ENCODE measurements at regions of chr2 and their contacts with region 1.

Region 1: GRCh38 chr2:69565431-69565839 is 78.1 kb downstream of the AAK1 start:
- DNase-seq: peak; percentile 40
- ATAC-seq: peak; percentile 99
- H3K4me3 ChIP-seq: no peak overlapping the region
- H3K27ac ChIP-seq: no peak overlapping the region
- H3K4me1 ChIP-seq: 0 out of 2 replicates have a peak, but pooled peaks cover 2% of the 10 kb centered on the region
- H3K27me3 ChIP-seq: no peaks in the 10 kb centered on the region
- CTCF ChIP-seq: peak; percentile 83 to 97 (median 89)
- EP300 ChIP-seq: no peak
- POLR2A ChIP-seq: no peak
- RAD21 ChIP-seq: peak; percentile 71

Region 2: DNA sequence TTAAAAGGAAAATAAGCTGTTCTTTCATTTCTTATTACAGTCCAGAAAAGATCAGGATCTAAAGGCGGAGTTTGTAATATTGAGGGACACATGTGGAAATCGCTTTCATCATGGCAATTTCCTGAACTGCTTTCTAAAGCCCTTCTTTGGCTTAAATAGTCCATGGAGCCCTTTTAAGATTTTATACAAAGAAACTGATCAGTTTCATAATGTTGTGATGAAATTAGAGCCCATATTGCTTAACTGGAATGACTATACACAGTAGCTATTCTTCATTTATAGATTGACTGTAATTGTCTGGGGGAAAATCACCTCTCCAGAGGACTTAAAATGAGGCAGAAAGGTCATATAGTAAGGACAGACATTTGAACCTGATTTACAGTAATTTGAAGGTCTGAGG is 1846.1 kb before region 1 on chr2:
- CTCF ChIA-PET with region 1: no interaction called
- POLR2A ChIA-PET with region 1: no interaction called
- RAD21 ChIA-PET with region 1: no interaction called
- SMC1A ChIA-PET with region 1: no interaction called
- in situ Hi-C with region 1: no loop called
- intact Hi-C with region 1: no loop called
- DNase-seq: no peak
- ATAC-seq: no peak
- H3K4me3 ChIP-seq: no peak overlapping the region
- H3K27ac ChIP-seq: no peak overlapping the region
- H3K4me1 ChIP-seq: no peaks in the 10 kb centered on the region
- H3K27me3 ChIP-seq: no peaks in the 10 kb centered on the region
- CTCF ChIP-seq: no peak
- EP300 ChIP-seq: no peak
- POLR2A ChIP-seq: no peak
- RAD21 ChIP-seq: no peak

Region 3: DNA sequence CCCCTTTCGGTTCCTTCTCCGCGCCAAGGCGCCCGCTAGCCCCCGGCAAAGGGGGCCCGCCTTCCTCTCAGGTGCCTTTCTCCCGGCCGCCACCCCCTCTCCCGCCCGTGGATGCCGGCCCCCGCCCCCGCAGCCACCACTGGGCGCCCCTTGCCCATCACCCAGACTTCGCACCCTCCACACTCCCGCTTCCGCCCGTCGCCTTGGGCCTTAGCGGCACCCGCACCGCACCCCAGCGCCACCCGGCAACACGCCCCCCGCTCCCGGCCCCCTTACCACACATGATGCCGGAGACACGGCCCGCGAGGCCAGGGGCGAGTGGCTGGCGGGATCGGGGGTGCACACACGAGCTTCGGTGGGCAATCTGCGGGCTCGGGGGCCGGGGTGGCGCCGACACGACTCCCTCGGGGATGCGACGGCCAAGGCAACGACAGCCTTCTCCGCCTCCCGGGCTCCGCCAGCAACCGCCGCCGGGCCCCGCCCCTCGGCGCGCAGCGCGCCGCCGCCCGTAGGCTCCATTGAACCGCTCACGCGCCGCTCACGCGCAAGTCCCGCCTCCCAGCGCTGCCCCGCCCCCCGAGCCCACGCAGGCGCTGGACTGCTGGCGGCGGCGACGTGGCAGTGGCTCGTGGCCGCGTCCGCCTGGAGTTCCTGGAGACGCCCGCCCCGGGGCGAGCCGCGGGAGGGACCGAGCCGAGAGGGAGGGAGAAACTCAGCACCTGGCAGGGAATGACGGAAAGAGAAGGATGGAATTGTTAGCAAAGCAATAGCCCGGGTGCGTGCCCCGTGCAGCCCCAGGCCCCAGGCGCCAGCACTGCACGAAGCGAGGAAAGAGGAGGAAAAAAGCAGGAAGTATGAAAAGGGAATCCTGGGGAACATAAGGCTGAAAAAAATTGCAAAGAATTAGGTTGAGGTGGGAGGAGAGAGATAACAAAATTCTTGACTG is 178.4 kb before region 1 on chr2 and contains the start of gene GFPT1:
- CTCF ChIA-PET with region 1: interaction called, 16 read pairs
- POLR2A ChIA-PET with region 1: interaction called, 5 read pairs
- RAD21 ChIA-PET with region 1: interaction called, 9 read pairs
- SMC1A ChIA-PET with region 1: interaction called, 9 read pairs
- in situ Hi-C with region 1: no loop called
- intact Hi-C with region 1: no loop called
- DNase-seq: peak; percentile 54
- ATAC-seq: peak; percentile 93
- H3K4me3 ChIP-seq: peak within 1 kb of the TSS; percentile 88
- H3K27ac ChIP-seq: peak within 1 kb of the TSS; percentile 82
- H3K4me1 ChIP-seq: peaks cover 12% of the 10 kb centered on the region; the same call in 1 of the 2 replicates
- H3K27me3 ChIP-seq: no peaks in the 10 kb centered on the region
- CTCF ChIP-seq: no peak
- EP300 ChIP-seq: no peak
- POLR2A ChIP-seq: peak; percentile 95
- RAD21 ChIP-seq: no peak
- polyA plus RNA-seq, gene GFPT1: 10.1 to 13.0 TPM

Region 4: DNA sequence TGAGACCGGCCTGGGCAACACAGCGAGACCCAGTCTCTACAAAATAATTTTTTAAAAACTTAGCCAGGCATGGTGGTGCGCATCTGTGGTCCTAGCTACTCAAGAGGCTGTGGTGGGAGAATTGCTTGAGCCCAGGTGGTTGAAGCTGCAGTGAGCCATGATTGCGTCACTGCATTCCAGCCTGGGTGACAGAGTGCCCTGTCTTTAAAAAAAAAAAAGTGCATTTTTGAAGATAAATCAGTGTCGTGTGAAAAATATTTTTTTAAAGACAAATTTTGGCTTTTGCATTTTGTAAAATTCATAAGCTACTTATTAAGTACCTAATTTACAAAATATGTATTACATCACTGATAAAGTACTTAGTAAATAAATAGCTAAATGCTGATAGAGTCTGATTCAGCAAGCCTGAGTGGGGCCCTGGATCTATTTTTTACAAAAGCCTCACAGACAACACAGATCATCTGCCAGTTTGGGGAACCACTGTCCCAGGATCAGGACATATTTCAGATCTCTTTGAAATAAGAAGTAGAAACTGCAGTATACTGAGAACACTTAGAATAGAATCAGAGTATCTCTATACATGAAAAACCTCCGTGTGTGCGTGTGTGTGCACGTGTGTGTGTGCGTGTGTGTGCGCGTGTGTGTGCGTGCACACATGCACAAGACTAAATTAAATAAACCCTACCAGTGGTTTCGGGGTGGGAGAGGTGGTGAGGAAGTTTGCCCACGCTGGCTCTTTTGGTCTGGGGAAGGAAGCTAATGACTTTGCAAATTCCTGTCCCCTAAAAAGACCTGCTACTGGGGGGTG is 16.5 kb after region 1 on chr2:
- CTCF ChIA-PET with region 1: interaction called, 144 read pairs
- POLR2A ChIA-PET with region 1: interaction called, 7 read pairs
- RAD21 ChIA-PET with region 1: interaction called, 7 read pairs
- SMC1A ChIA-PET with region 1: interaction called, 30 read pairs
- in situ Hi-C with region 1: no loop called
- intact Hi-C with region 1: no loop called
- DNase-seq: peak; percentile 40
- ATAC-seq: peak; percentile 64
- H3K4me3 ChIP-seq: peak overlapping the region; percentile 44; the same call in 1 of the 2 replicates
- H3K27ac ChIP-seq: peak overlapping the region; percentile 28
- H3K4me1 ChIP-seq: peaks cover 28% of the 10 kb centered on the region
- H3K27me3 ChIP-seq: no peaks in the 10 kb centered on the region
- CTCF ChIP-seq: no peak
- EP300 ChIP-seq: no peak
- POLR2A ChIP-seq: no peak
- RAD21 ChIP-seq: no peak

Region 5: DNA sequence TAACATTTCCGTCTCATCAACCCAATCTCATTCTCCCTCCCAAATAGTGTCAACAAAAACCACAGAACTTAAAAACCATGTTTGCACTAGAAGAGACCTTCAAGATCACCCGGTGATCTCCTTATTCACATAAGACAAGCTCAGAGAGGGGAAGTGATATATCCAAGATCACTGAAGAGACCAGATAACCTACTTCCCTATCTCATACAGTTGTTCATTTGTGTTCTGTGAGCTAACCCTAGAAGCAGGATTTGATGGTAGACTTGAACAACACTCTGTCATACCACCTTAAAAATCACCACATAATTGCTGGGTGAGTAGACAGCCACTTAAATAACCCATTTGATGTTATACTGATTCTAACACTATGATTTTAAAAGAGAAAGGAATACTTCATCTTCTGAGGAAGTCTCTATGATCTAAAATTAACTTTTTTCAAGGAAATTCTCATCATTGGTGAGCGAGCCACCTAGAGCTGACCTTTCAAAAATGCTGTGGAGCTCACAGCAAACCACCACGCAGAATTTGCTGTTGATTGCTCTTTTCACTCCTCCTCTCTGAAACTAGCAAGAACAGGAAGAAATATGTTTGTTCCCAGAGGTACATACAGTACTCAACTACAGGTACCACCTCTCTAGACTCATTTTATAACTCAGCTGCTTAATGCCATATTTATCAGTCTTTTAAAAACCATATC is 63.0 kb after region 1 on chr2:
- CTCF ChIA-PET with region 1: interaction called, 17 read pairs
- POLR2A ChIA-PET with region 1: no interaction called
- RAD21 ChIA-PET with region 1: no interaction called
- SMC1A ChIA-PET with region 1: interaction called, 4 read pairs
- in situ Hi-C with region 1: no loop called
- intact Hi-C with region 1: no loop called
- DNase-seq: no peak
- ATAC-seq: peak; percentile 62
- H3K4me3 ChIP-seq: no peak overlapping the region
- H3K27ac ChIP-seq: no peak overlapping the region
- H3K4me1 ChIP-seq: peaks cover 11% of the 10 kb centered on the region
- H3K27me3 ChIP-seq: no peaks in the 10 kb centered on the region
- CTCF ChIP-seq: no peak
- EP300 ChIP-seq: no peak
- POLR2A ChIP-seq: no peak
- RAD21 ChIP-seq: no peak

Region 6: GRCh38 chr2:69683101-69683971 is 117.9 kb after region 1 on chr2:
- CTCF ChIA-PET with region 1: interaction called, 14 read pairs
- POLR2A ChIA-PET with region 1: no interaction called
- RAD21 ChIA-PET with region 1: no interaction called
- SMC1A ChIA-PET with region 1: interaction called, 4 read pairs
- in situ Hi-C with region 1: no loop called
- intact Hi-C with region 1: no loop called
- DNase-seq: no peak
- ATAC-seq: no peak
- H3K4me3 ChIP-seq: no peak overlapping the region; the same call in 1 of the 2 replicates
- H3K27ac ChIP-seq: no peak overlapping the region
- H3K4me1 ChIP-seq: no peaks in the 10 kb centered on the region; the same call in 1 of the 2 replicates
- H3K27me3 ChIP-seq: no peaks in the 10 kb centered on the region
- CTCF ChIP-seq: no peak
- EP300 ChIP-seq: no peak
- POLR2A ChIP-seq: no peak
- RAD21 ChIP-seq: no peak

Region 7: DNA sequence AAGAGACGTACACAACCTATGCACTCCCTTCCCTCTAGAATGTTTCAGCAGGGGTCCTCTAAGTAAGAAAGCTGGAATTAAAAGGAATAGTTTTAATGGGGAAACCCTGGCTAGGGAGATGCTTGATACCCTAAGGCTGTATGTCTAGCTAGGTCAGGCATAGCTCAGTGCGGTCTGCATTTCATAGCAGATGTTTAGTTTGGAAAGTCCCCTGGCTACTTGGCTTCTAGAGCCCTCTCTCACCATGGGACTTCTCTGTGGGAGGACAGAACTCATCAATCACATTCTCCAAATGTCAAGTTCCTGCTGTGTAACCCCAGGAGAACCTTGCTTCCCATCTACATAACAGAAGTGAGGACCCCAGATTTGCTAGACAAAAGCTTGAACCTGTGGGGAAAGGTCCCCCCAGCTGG is 152.4 kb after region 1 on chr2:
- CTCF ChIA-PET with region 1: interaction called, 293 read pairs
- POLR2A ChIA-PET with region 1: interaction called, 3 read pairs
- RAD21 ChIA-PET with region 1: interaction called, 46 read pairs
- SMC1A ChIA-PET with region 1: interaction called, 64 read pairs
- in situ Hi-C with region 1: loop called (anchors 5 kb)
- intact Hi-C with region 1: no loop called
- DNase-seq: no peak
- ATAC-seq: peak; percentile 82
- H3K4me3 ChIP-seq: no peak overlapping the region
- H3K27ac ChIP-seq: no peak overlapping the region
- H3K4me1 ChIP-seq: peaks cover 12% of the 10 kb centered on the region; the same call in 1 of the 2 replicates
- H3K27me3 ChIP-seq: no peaks in the 10 kb centered on the region
- CTCF ChIP-seq: no peak
- EP300 ChIP-seq: peak in 1 of 2 experiments; percentile 9; a peak in 1 of 4 replicates
- POLR2A ChIP-seq: no peak
- RAD21 ChIP-seq: no peak

Region 8: DNA sequence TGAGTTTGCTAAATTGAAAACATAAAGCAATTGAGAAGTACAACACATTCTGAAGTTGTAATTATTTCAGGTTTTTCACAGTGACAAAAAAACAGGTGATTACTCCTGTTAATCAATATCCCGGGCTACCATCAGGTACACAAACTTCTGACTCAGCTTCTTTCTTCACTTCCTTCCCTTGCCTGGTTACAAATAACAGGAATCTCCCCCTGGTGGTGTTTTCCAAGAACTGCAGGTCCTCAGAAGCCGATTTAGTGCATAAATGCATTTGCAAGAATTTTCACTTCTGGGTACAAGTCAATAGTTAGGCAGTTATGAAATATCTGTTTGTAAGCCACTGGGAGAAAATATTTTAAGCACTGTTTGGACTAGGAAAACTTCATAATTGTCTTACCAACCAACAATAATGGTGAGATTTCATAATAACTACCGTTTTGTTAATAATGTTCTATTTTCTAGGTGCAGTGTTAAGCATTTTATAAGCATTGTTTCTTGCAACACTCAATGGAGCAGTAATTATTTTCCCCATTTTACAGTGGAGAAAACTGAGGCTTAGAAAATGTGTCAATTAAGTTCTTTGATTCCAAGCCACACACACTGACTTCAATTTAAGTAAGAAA is 251.6 kb after region 1 on chr2:
- CTCF ChIA-PET with region 1: interaction called, 7 read pairs
- POLR2A ChIA-PET with region 1: no interaction called
- RAD21 ChIA-PET with region 1: interaction called, 4 read pairs
- SMC1A ChIA-PET with region 1: interaction called, 3 read pairs
- in situ Hi-C with region 1: loop called (anchors 25 kb)
- intact Hi-C with region 1: no loop called
- DNase-seq: peak; percentile 66
- ATAC-seq: peak; percentile 89
- H3K4me3 ChIP-seq: no peak overlapping the region
- H3K27ac ChIP-seq: no peak overlapping the region; the same call in 1 of the 2 replicates
- H3K4me1 ChIP-seq: no peaks in the 10 kb centered on the region
- H3K27me3 ChIP-seq: no peaks in the 10 kb centered on the region
- CTCF ChIP-seq: peak; percentile 71 to 82 (median 80)
- EP300 ChIP-seq: no peak
- POLR2A ChIP-seq: no peak
- RAD21 ChIP-seq: peak; percentile 92

Region 9: GRCh38 chr2:70078384-70078783 is 512.9 kb after region 1 on chr2:
- CTCF ChIA-PET with region 1: no interaction called
- POLR2A ChIA-PET with region 1: no interaction called
- RAD21 ChIA-PET with region 1: no interaction called
- SMC1A ChIA-PET with region 1: no interaction called
- in situ Hi-C with region 1: no loop called
- intact Hi-C with region 1: no loop called
- DNase-seq: no peak
- ATAC-seq: peak; percentile 30; the same call in 1 of the 3 replicates
- H3K4me3 ChIP-seq: no peak overlapping the region
- H3K27ac ChIP-seq: peak overlapping the region; percentile 32; the same call in 1 of the 2 replicates
- H3K4me1 ChIP-seq: peaks cover 12% of the 10 kb centered on the region
- H3K27me3 ChIP-seq: no peaks in the 10 kb centered on the region
- CTCF ChIP-seq: no peak
- EP300 ChIP-seq: no peak
- POLR2A ChIP-seq: no peak
- RAD21 ChIP-seq: no peak